ENCODE measurements at regions of chr6 and their contacts with region 1.

Region 1: DNA sequence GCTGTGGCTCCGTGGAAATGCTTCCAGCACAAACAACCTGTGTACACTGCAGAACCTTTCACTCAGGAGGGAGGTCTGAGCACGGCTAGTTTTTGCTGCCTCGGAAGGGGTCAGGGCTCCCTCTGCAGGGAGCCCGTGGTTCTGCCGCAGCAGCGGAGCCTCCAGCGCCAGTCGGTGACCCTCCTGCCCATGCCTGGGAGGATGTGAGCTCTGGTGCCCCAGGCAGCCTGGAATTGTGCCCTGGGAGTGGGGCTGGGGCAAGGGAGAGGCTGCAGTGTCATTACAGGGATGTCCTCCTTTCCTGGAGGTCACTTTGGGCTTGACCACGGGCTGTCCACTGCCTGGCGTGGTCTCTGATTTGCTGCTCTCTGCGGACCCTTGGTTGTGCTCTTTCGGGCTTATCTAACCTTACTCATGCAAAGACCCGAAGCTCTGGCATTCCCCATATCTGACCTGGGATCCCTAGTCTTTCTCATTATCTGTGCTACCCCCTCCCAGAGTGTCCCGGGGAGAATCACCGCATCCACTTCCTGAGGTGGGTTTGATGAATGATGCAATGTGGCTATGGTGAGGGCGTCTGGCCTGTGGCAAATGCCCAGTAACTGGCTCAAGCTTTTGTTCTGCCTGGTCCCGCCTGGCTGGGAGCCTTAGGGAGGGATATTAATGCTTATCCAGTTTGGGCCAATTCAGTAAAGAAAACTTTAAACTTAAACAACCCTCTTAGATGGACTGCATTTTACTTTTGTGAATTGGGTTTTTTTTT is 59.6 kb upstream of the TAGAP start:
- DNase-seq: peak; percentile 23
- ATAC-seq: peak; percentile 96
- H3K4me3 ChIP-seq: no peak overlapping the region
- H3K27ac ChIP-seq: no peak overlapping the region
- H3K4me1 ChIP-seq: peaks cover 17% of the 10 kb centered on the region; the same call in 1 of the 2 replicates
- H3K27me3 ChIP-seq: peaks cover 3 to 48% of the 10 kb centered on the region in 2 experiments; a peak in 4 of 5 replicates
- CTCF ChIP-seq: peak; percentile 93
- EP300 ChIP-seq: no peak
- POLR2A ChIP-seq: no peak
- RAD21 ChIP-seq: peak; percentile 84

Region 2: DNA sequence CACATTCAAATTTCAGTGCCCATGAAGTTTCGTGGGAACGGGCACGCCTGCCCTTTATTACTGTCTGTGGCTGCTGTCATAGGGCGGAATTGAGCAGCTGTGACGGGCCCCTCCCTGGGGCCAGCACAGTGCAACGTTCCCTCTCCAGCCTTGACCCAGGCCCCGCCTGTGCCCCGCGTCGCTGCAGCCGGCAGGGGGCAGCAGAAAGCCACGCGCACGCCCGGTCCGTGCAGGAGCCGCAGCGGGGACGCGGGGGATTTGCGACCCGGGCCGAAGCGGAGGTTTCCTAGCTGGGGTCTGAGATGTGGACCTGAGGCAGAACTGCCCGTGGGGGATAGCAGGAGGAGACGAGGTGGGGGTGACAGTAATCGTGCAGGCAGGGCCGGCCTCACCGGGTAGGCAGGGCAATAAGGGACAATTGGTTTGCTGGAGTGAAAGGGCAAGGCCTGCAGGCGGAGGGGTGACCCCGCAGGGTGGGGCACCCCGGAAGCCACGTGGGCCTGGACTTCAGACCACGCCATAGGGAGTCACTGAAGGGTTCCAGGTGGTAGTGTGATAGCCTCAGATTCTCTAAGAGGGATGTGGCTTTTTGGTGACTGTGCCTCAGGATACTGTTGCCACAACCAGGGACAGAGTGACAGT is 400.0 kb before region 1 on chr6:
- CTCF ChIA-PET with region 1: no interaction called
- POLR2A ChIA-PET with region 1: no interaction called
- in situ Hi-C with region 1: loop called (anchors 25 kb)
- intact Hi-C with region 1: loop called (anchors 10 kb)
- DNase-seq: peak; percentile 64
- ATAC-seq: peak; percentile 96
- H3K4me3 ChIP-seq: peak overlapping the region; percentile 45 to 77 (median 62)
- H3K27ac ChIP-seq: no peak overlapping the region
- H3K4me1 ChIP-seq: peaks cover 26% of the 10 kb centered on the region
- H3K27me3 ChIP-seq: peaks cover 4 to 17% of the 10 kb centered on the region in 2 experiments; a peak in 3 of 5 replicates
- CTCF ChIP-seq: peak; percentile 100
- EP300 ChIP-seq: no peak
- POLR2A ChIP-seq: 0 out of 4 replicates have a peak, but pooled peaks of 1 of the 2 experiments have one; percentile 15
- RAD21 ChIP-seq: peak; percentile 97

Region 3: GRCh38 chr6:159008656-159009288 is 95.6 kb before region 1 on chr6:
- CTCF ChIA-PET with region 1: interaction called, 4 read pairs
- POLR2A ChIA-PET with region 1: no interaction called
- in situ Hi-C with region 1: no loop called
- intact Hi-C with region 1: loop called (anchors 1 kb)
- DNase-seq: peak; percentile 25
- ATAC-seq: peak; percentile 54
- H3K4me3 ChIP-seq: no peak overlapping the region
- H3K27ac ChIP-seq: no peak overlapping the region
- H3K4me1 ChIP-seq: peaks cover 2% of the 10 kb centered on the region
- H3K27me3 ChIP-seq: no peaks in the 10 kb centered on the region
- CTCF ChIP-seq: peak; percentile 55
- EP300 ChIP-seq: no peak
- POLR2A ChIP-seq: no peak
- RAD21 ChIP-seq: 0 out of 2 replicates have a peak, but pooled peaks have one; percentile 23

Region 4: GRCh38 chr6:159042003-159042825 is 62.1 kb before region 1 on chr6:
- CTCF ChIA-PET with region 1: interaction called, 17 read pairs
- POLR2A ChIA-PET with region 1: no interaction called
- in situ Hi-C with region 1: loop called (anchors 5 kb)
- intact Hi-C with region 1: loop called (anchors 1 kb)
- DNase-seq: peak; percentile 70
- ATAC-seq: peak; percentile 95
- H3K4me3 ChIP-seq: no peak overlapping the region
- H3K27ac ChIP-seq: no peak overlapping the region
- H3K4me1 ChIP-seq: no peaks in the 10 kb centered on the region
- H3K27me3 ChIP-seq: peaks cover 10 to 71% of the 10 kb centered on the region in 2 experiments; a peak in 4 of 5 replicates
- CTCF ChIP-seq: peak; percentile 92
- EP300 ChIP-seq: no peak
- POLR2A ChIP-seq: no peak
- RAD21 ChIP-seq: peak; percentile 69; the same call in 1 of the 2 replicates